ENCODE measurements at regions of chr1 and their contacts with region 1.

Region 1: GRCh38 chr1:25253911-25254310 is 6.7 kb upstream of the RSRP1 start:
- DNase-seq: no peak
- ATAC-seq: no peak
- H3K4me3 ChIP-seq: no peak overlapping the region
- H3K27ac ChIP-seq: no peak overlapping the region
- H3K4me1 ChIP-seq: no peaks in the 10 kb centered on the region
- H3K27me3 ChIP-seq: no peaks in the 10 kb centered on the region
- CTCF ChIP-seq: no peak
- POLR2A ChIP-seq: no peak

Region 2: GRCh38 chr1:24374891-24375786 is 878.8 kb before region 1 on chr1:
- intact Hi-C with region 1: no loop called
- DNase-seq: no peak
- ATAC-seq: no peak
- H3K4me3 ChIP-seq: no peak overlapping the region
- H3K27ac ChIP-seq: no peak overlapping the region
- H3K4me1 ChIP-seq: no peaks in the 10 kb centered on the region
- H3K27me3 ChIP-seq: no peaks in the 10 kb centered on the region
- CTCF ChIP-seq: no peak
- POLR2A ChIP-seq: no peak

Region 3: DNA sequence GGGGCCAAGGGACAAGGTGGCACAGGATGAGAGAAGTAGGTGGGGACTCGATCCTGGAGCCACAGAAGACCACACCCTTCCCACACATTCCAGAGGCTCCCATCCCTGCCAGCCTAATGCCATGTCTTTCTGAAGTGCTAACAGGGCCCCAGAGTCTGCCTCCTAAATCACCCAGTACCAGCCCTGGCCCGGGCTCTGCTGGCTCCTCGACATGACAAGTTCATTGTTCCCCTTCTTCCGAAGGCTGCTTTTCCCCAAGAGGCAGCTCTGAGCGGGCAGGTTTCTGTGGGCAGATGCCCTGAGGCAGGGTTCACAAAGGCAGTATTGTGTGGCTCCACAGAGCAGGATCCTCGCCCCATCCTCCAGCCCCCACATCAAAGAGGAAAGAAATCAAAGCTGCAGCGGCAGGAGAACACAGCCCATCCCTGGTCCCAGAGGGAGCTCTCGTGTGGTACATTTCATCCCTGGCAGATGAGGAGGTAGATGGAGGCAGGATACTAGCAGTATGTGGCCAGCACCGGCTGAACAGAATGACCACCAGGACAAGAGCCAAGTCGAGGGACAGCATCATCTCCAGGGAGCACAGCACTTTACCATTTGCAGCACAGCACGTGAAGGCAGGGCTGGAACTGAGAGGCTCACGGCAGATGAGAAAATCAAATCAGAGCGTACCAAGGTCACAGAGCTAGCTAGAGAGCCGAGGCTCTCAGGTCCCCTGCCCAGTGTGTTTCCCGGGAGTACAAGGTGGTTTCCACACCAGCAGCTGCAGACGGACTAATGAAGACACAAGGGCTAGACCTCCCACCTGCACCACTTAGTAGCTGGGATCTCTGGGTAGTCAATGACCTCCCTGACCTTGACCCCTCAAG is 86.3 kb before region 1 on chr1:
- intact Hi-C with region 1: no loop called
- DNase-seq: no peak
- ATAC-seq: no peak
- H3K4me3 ChIP-seq: no peak overlapping the region
- H3K27ac ChIP-seq: no peak overlapping the region
- H3K4me1 ChIP-seq: no peaks in the 10 kb centered on the region
- H3K27me3 ChIP-seq: peaks cover 0 to 5% (median 0%) of the 10 kb centered on the region in 9 donors
- CTCF ChIP-seq: no peak
- POLR2A ChIP-seq: no peak

Region 4: GRCh38 chr1:25343872-25344271 is 90.0 kb after region 1 on chr1:
- intact Hi-C with region 1: loop called in 2 of 10 experiments (anchors 5 kb)
- DNase-seq: no peak
- ATAC-seq: no peak
- H3K4me3 ChIP-seq: no peak overlapping the region
- H3K27ac ChIP-seq: no peak overlapping the region
- H3K4me1 ChIP-seq: peaks cover 0 to 38% (median 25%) of the 10 kb centered on the region in 12 donors
- H3K27me3 ChIP-seq: no peaks in the 10 kb centered on the region
- CTCF ChIP-seq: no peak
- POLR2A ChIP-seq: no peak